B cell (primary cell): ENCODE measurements at regions of chr9 and their contacts with region 1.

Region 1: DNA sequence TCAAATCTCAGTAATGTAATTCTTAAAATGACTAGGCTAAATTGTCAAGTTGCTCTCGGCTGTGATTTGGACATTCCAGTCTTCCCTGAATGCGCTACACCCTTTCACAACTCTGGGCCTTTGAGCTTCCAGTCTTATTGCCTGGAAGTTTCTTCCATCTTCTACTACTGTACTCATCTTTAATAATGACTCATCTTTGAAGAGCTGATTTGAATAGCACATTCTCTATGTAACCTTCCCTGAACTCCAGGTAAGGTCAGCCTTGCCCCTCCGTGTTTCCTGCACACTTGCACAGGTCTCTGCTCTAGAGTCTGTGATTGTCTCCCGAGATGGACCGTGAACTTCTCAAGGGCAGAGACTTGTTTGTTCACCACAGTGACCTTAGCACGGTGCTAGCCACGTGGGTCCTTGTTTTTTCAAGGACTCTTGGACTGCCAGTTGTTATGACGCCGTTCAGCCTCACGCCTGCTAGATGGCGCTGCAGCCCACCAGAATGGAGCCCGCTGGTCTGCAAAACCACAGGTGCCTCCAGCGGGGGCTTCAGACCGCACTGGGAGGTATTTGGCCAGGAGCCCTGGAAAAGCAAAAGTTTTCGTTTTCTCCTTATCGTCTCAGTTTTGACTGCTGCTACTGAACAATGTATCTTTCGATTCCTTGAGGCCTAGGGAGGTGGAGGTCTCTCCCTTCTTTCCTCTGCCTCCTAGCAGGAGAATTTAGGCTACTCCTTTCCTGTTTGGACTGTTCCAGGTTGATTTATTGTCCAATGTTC is 44.4 kb downstream of the SEC61B start:
- DNase-seq: peak; percentile 81
- ATAC-seq: peak; percentile 74
- H3K4me3 ChIP-seq: peak overlapping the region in 1 of 5 experiments; percentile 3
- H3K4me3 Mint-ChIP-seq: peak overlapping the region; percentile 71
- H3K27ac ChIP-seq: no peak overlapping the region
- H3K27ac Mint-ChIP-seq: peak overlapping the region; percentile 59
- H3K4me1 ChIP-seq: peaks cover 6 to 9% of the 10 kb centered on the region in 2 donors
- H3K4me1 Mint-ChIP-seq: peaks cover 31% of the 10 kb centered on the region
- H3K27me3 ChIP-seq: no peaks in the 10 kb centered on the region
- H3K27me3 Mint-ChIP-seq: peaks cover 3% of the 10 kb centered on the region
- CTCF ChIP-seq: peak; percentile 95

Region 2: GRCh38 chr9:99491408-99492158 is 225.1 kb after region 1 on chr9:
- CTCF ChIA-PET with region 1: no interaction called
- POLR2A ChIA-PET with region 1: no interaction called
- intact Hi-C with region 1: no loop called
- DNase-seq: peak; percentile 26
- ATAC-seq: no peak
- H3K4me3 ChIP-seq: no peak overlapping the region
- H3K4me3 Mint-ChIP-seq: no peak overlapping the region
- H3K27ac ChIP-seq: no peak overlapping the region
- H3K27ac Mint-ChIP-seq: no peak overlapping the region
- H3K4me1 ChIP-seq: peaks cover 4 to 9% of the 10 kb centered on the region in 2 donors
- H3K4me1 Mint-ChIP-seq: peaks cover 11% of the 10 kb centered on the region
- H3K27me3 ChIP-seq: no peaks in the 10 kb centered on the region
- H3K27me3 Mint-ChIP-seq: peaks cover 5% of the 10 kb centered on the region
- CTCF ChIP-seq: no peak

Region 3: GRCh38 chr9:99523838-99524237 is 257.4 kb after region 1 on chr9:
- CTCF ChIA-PET with region 1: no interaction called
- POLR2A ChIA-PET with region 1: no interaction called
- intact Hi-C with region 1: no loop called
- DNase-seq: no peak
- ATAC-seq: no peak
- H3K4me3 ChIP-seq: no peak overlapping the region
- H3K4me3 Mint-ChIP-seq: no peak overlapping the region
- H3K27ac ChIP-seq: no peak overlapping the region
- H3K27ac Mint-ChIP-seq: no peak overlapping the region
- H3K4me1 ChIP-seq: no peaks in the 10 kb centered on the region
- H3K4me1 Mint-ChIP-seq: no peaks in the 10 kb centered on the region
- H3K27me3 ChIP-seq: no peaks in the 10 kb centered on the region
- H3K27me3 Mint-ChIP-seq: no peaks in the 10 kb centered on the region
- CTCF ChIP-seq: no peak

Region 4: DNA sequence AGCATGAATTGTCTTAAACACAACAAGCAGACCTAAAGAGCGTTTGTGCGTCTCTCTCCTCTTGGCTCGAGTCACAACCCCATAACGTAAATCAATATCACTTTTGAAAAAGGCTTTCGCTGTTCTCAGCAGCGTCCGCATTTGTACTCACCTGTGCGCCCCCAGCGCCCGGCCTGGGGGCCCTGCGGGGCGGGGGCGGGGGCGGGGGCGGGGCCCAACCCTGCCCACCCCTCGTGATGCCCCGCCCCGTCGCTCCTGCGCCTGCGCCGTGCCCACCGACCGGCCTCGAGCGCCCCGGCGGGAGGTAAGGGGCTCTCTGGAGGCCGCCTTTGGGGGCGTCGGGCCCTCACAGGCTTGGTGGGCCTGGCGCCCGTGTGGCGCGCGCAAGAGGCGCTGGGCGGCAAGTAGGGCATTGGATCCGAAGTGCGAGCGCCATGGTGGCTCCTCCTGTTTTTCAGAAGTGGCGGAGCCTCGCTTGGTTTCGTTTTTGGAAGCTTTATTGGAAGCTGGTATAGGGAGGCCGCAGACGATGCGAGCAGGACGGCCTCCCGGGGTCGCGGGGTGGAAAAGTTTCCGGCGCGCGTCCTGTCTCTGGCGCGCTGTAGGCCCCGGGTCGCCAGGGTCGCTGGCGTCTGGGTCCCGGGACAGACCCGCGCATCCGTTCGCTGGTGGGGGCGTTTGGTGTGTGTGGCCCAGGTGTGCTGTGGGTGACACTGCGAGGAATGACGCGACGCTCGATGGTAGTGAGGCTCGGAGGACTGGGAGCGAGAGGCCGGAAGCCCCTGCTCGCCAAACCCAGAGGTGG is 640.2 kb after region 1 on chr9 and contains the start of gene STX17:
- CTCF ChIA-PET with region 1: no interaction called
- POLR2A ChIA-PET with region 1: no interaction called
- intact Hi-C with region 1: loop called (anchors 1 kb)
- DNase-seq: peak; percentile 93
- ATAC-seq: peak; percentile 88
- H3K4me3 ChIP-seq: peak within 1 kb of the TSS; percentile 75 to 98 (median 97)
- H3K4me3 Mint-ChIP-seq: peak within 1 kb of the TSS; percentile 99
- H3K27ac ChIP-seq: peak within 1 kb of the TSS; percentile 91 to 96
- H3K27ac Mint-ChIP-seq: peak within 1 kb of the TSS; percentile 98
- H3K4me1 ChIP-seq: peaks cover 4 to 14% of the 10 kb centered on the region in 2 donors
- H3K4me1 Mint-ChIP-seq: peaks cover 17% of the 10 kb centered on the region
- H3K27me3 ChIP-seq: peaks cover 0 to 3% (median 0%) of the 10 kb centered on the region in 4 experiments
- H3K27me3 Mint-ChIP-seq: no peaks in the 10 kb centered on the region
- CTCF ChIP-seq: no peak
- total RNA-seq, gene STX17: 40.2 and 42.9 TPM in 2 replicates

Region 5: DNA sequence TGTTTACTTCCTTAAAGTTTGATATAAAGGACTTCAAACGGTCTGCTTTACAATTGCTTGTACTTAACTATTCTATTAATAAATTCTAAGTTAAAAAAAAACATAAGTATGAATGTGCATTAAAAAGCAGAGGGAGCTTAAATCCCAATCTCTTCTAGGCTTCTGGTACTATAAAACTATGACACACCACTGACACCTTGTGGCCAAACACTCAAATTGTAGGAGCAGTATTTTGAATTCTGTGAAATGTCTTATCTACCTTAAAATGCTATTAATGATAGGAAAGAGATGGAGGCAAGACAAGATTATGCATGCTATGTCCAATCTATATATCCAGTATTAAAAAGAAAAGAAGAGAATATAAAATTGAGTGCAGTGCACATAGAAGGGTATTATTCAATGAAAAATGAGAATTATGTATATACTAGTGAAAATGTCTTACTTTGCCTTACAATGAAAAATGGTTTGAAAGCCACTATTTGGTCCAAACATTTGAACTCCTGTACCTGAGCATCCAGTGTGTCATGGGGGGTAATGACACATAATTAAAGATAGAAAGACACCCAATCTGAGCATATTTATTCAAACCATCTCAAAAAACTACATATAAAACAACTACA is 744.7 kb after region 1 on chr9:
- CTCF ChIA-PET with region 1: interaction called, 10 read pairs
- POLR2A ChIA-PET with region 1: no interaction called
- intact Hi-C with region 1: loop called (anchors 2 kb)
- DNase-seq: peak; percentile 66
- ATAC-seq: no peak
- H3K4me3 ChIP-seq: no peak overlapping the region
- H3K4me3 Mint-ChIP-seq: no peak overlapping the region
- H3K27ac ChIP-seq: no peak overlapping the region
- H3K27ac Mint-ChIP-seq: no peak overlapping the region
- H3K4me1 ChIP-seq: no peaks in the 10 kb centered on the region
- H3K4me1 Mint-ChIP-seq: no peaks in the 10 kb centered on the region
- H3K27me3 ChIP-seq: no peaks in the 10 kb centered on the region
- H3K27me3 Mint-ChIP-seq: no peaks in the 10 kb centered on the region
- CTCF ChIP-seq: peak; percentile 82

Region 6: DNA sequence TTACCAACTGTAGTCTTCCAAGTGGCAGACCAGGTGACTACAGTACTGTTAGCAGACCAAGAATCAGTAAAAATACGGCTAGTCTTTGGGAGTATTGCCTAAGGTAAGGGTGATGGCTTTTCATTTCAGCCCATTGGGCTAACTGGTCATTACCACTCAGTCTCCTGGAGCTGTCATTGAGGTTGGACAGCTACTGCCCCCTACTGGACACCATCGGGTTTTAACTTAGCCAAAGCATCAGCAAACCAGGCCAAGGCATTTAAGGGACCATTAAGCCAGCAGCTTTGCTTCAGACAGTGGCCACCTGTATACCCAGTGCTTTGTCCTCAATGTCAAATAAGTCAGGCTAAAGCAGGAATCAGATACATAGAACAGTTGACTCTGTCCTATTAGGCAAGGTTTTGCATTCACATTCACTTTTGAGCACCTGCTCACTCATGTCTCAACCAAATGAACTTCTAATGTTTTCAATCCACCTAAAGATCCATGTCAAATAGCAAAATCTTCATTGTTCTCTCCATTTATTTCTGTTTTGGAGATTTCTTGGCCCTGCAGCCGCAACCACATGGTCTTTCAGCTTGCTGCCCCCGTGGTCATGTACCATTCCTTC is 949.8 kb after region 1 on chr9:
- CTCF ChIA-PET with region 1: interaction called, 3 read pairs
- POLR2A ChIA-PET with region 1: no interaction called
- intact Hi-C with region 1: loop called (anchors 5 kb)
- DNase-seq: peak; percentile 81
- ATAC-seq: peak; percentile 85
- H3K4me3 ChIP-seq: no peak overlapping the region
- H3K4me3 Mint-ChIP-seq: no peak overlapping the region
- H3K27ac ChIP-seq: no peak overlapping the region
- H3K27ac Mint-ChIP-seq: no peak overlapping the region
- H3K4me1 ChIP-seq: no peaks in the 10 kb centered on the region
- H3K4me1 Mint-ChIP-seq: no peaks in the 10 kb centered on the region
- H3K27me3 ChIP-seq: no peaks in the 10 kb centered on the region
- H3K27me3 Mint-ChIP-seq: no peaks in the 10 kb centered on the region
- CTCF ChIP-seq: peak; percentile 79